ENCODE measurements at regions of chr9 and their contacts with region 1.

Region 1: DNA sequence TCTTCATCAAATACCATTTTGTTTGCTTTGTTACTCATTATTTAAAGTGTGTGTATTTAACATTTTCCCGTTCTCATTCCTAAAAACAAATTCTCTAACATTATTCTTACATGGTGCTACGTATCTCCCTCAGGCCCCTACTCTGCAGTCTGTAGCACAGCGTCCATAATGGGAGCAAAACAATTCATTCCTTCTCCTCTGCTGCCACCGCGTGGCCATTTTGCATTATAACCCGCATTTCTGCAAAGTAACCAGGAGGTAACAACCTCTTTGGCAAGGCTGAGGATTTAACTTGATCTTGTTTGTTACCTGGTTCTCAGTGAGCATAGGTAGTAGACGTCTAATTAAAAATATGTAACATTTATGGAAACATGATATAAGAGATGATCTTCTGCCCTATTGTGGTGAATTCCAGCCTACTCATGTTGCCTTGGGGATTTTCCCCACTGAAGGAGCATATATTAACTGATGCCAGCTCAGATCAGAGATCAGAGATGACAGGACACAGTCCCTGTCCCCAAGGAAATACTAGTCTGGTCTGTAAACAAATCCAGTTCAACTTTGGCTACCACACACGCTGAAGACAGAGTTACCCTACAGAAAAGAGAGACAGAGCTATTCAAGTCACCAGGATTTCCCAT is 10.5 kb downstream of the OR1K1 start:
- DNase-seq: peak; percentile 50 to 86 (median 77)
- ATAC-seq: peak; percentile 97
- H3K4me3 ChIP-seq: no peak overlapping the region
- H3K4me3 Mint-ChIP-seq: no peak overlapping the region
- H3K27ac ChIP-seq: no peak overlapping the region
- H3K27ac Mint-ChIP-seq: no peak overlapping the region
- H3K4me1 ChIP-seq: peaks cover 10% of the 10 kb centered on the region
- H3K4me1 Mint-ChIP-seq: peaks cover 18% of the 10 kb centered on the region
- H3K27me3 ChIP-seq: no peaks in the 10 kb centered on the region
- H3K27me3 Mint-ChIP-seq: no peaks in the 10 kb centered on the region
- CTCF ChIP-seq: peak; percentile 95

Region 2: DNA sequence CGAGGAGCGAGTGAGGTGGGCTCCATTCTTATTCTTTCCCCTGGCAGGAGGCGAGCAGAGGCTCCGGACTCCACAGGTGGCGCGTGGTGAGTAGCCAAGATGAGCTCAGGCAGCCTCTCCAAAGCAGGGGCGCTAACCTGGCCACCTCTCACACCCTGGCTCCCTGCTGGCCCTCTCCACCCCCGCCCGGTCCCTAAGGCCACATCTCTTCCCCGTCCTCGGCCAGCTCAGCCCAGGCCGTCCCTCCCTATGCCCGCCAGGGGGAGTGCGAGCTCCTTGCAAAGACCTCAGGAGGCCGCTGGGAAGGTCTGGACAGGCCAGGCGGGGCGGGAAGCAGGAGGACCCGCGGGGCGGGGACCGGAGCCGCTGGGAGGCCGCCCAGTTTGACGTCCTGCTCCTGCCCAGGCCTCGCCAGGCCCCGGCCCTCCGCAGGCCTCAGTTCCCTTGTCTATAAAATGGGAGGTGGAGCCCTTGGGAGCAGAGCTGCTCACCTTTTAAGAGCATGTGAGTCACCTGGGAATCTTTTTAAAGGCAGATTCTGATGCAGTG is 1264.5 kb before region 1 on chr9:
- CTCF ChIA-PET with region 1: no interaction called
- POLR2A ChIA-PET with region 1: no interaction called
- intact Hi-C with region 1: loop called in 1 of 2 experiments (anchors 5 kb)
- DNase-seq: peak; percentile 28 to 72 (median 62)
- ATAC-seq: peak; percentile 59
- H3K4me3 ChIP-seq: no peak overlapping the region
- H3K4me3 Mint-ChIP-seq: no peak overlapping the region
- H3K27ac ChIP-seq: no peak overlapping the region
- H3K27ac Mint-ChIP-seq: no peak overlapping the region
- H3K4me1 ChIP-seq: peaks cover 14% of the 10 kb centered on the region
- H3K4me1 Mint-ChIP-seq: peaks cover 2% of the 10 kb centered on the region
- H3K27me3 ChIP-seq: peaks cover 4 to 7% of the 10 kb centered on the region in 2 experiments
- H3K27me3 Mint-ChIP-seq: peaks cover 33% of the 10 kb centered on the region
- CTCF ChIP-seq: peak; percentile 57

Region 3: GRCh38 chr9:122350638-122351355 is 459.6 kb before region 1 on chr9:
- CTCF ChIA-PET with region 1: interaction called, 5 read pairs
- POLR2A ChIA-PET with region 1: no interaction called
- intact Hi-C with region 1: loop called (anchors 1 to 2 kb)
- DNase-seq: peak; percentile 58 to 89 (median 76)
- ATAC-seq: peak; percentile 82
- H3K4me3 ChIP-seq: no peak overlapping the region
- H3K4me3 Mint-ChIP-seq: no peak overlapping the region
- H3K27ac ChIP-seq: no peak overlapping the region
- H3K27ac Mint-ChIP-seq: no peak overlapping the region
- H3K4me1 ChIP-seq: peaks cover 21% of the 10 kb centered on the region
- H3K4me1 Mint-ChIP-seq: peaks cover 27% of the 10 kb centered on the region
- H3K27me3 ChIP-seq: peaks cover 0 to 5% of the 10 kb centered on the region in 2 experiments
- H3K27me3 Mint-ChIP-seq: peaks cover 21% of the 10 kb centered on the region
- CTCF ChIP-seq: peak; percentile 97

Region 4: DNA sequence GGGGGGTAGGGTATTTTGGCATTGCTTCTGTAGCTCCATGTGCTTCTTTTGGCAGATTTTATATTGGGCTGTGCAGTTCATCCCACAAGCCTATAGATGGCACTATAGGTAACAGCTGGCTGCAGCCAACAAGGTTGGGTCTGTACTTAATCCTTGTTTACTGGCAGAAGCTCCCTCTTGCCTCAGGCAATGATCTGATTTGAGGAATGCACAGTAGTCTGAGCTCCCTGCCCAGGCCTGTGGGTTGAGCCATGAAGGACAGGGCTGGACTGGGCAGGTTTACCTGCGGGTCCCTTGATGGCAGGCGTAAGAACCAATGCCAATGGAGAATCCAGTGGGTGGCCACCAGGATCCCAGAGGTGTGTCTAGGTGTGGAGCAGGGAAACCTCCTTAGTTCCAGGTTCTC is 311.5 kb before region 1 on chr9:
- CTCF ChIA-PET with region 1: interaction called, 18 read pairs
- POLR2A ChIA-PET with region 1: no interaction called
- intact Hi-C with region 1: no loop called
- DNase-seq: peak in 3 of 9 experiments; percentile 14 to 51 (median 35)
- ATAC-seq: peak; percentile 71
- H3K4me3 ChIP-seq: no peak overlapping the region
- H3K4me3 Mint-ChIP-seq: no peak overlapping the region
- H3K27ac ChIP-seq: no peak overlapping the region
- H3K27ac Mint-ChIP-seq: no peak overlapping the region
- H3K4me1 ChIP-seq: no peaks in the 10 kb centered on the region
- H3K4me1 Mint-ChIP-seq: no peaks in the 10 kb centered on the region
- H3K27me3 ChIP-seq: no peaks in the 10 kb centered on the region
- H3K27me3 Mint-ChIP-seq: peaks cover 29% of the 10 kb centered on the region
- CTCF ChIP-seq: peak; percentile 72

Region 5: GRCh38 chr9:122695696-122696095 is 114.7 kb before region 1 on chr9:
- CTCF ChIA-PET with region 1: no interaction called
- POLR2A ChIA-PET with region 1: no interaction called
- intact Hi-C with region 1: no loop called
- DNase-seq: no peak
- ATAC-seq: no peak
- H3K4me3 ChIP-seq: no peak overlapping the region
- H3K4me3 Mint-ChIP-seq: no peak overlapping the region
- H3K27ac ChIP-seq: no peak overlapping the region
- H3K27ac Mint-ChIP-seq: no peak overlapping the region
- H3K4me1 ChIP-seq: no peaks in the 10 kb centered on the region
- H3K4me1 Mint-ChIP-seq: no peaks in the 10 kb centered on the region
- H3K27me3 ChIP-seq: no peaks in the 10 kb centered on the region
- H3K27me3 Mint-ChIP-seq: peaks cover 3% of the 10 kb centered on the region
- CTCF ChIP-seq: no peak

Region 6: DNA sequence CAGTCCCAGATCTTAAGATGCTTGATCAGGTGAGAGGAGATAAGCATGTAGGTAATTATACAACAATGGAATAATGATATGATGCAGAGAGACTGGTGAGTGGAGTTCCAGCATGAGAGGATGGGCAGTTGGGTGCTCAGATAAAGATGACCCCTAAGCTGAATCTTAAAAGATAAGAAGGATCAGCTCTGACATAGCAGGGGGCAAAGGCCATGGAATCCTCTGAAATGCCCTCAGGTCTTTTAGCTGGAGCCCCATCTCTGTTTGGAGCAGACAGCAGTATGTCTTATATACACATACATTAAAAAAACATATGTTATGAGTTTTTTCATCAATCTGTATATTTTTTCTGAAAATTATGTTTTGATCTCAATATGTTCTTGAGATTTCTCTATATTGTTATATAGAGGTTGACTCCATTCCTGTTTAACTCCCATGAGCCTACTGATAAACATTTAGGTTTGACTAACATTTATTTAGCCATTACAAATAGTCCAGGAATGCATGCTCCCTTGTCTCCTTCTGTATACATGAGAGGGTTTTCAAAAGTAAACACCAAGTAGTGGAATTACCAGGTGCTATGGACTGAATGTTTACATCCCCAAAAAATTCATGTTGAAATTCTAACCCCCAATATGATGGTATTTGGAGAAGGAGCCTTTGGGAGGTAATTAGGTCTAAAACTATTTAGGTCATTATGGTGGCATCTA is 25.3 kb before region 1 on chr9:
- CTCF ChIA-PET with region 1: no interaction called
- POLR2A ChIA-PET with region 1: no interaction called
- intact Hi-C with region 1: no loop called
- DNase-seq: no peak
- ATAC-seq: no peak
- H3K4me3 ChIP-seq: no peak overlapping the region
- H3K4me3 Mint-ChIP-seq: no peak overlapping the region
- H3K27ac ChIP-seq: no peak overlapping the region
- H3K27ac Mint-ChIP-seq: no peak overlapping the region
- H3K4me1 ChIP-seq: no peaks in the 10 kb centered on the region
- H3K4me1 Mint-ChIP-seq: no peaks in the 10 kb centered on the region
- H3K27me3 ChIP-seq: no peaks in the 10 kb centered on the region
- H3K27me3 Mint-ChIP-seq: no peaks in the 10 kb centered on the region
- CTCF ChIP-seq: no peak

Region 7: DNA sequence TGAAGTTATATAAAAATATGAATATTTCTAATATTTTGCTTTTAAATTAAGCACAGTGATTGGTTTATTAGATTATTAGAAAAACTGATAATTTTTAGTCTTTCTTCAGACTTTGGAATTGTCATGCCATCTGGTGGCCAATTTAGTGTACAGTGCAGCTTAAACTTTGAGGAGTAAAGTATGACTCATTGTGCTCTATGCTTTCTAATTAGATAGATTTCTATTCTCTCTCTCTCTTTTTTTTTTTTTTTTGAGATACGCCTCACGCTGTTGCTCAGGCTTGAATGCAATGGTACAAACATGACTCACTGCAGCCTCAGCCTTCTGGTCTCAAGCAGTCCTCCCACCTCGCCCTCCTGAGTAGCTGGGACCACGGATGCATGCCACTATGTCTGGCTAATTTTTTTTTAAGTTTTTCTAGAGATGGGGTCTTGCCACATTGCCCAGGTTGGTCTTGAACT is 181.0 kb after region 1 on chr9:
- CTCF ChIA-PET with region 1: no interaction called
- POLR2A ChIA-PET with region 1: no interaction called
- intact Hi-C with region 1: loop called in 1 of 2 experiments (anchors 10 kb)
- DNase-seq: peak in 5 of 9 experiments; percentile 12 to 65 (median 50)
- ATAC-seq: peak; percentile 86
- H3K4me3 ChIP-seq: no peak overlapping the region
- H3K4me3 Mint-ChIP-seq: no peak overlapping the region
- H3K27ac ChIP-seq: no peak overlapping the region
- H3K27ac Mint-ChIP-seq: no peak overlapping the region
- H3K4me1 ChIP-seq: no peaks in the 10 kb centered on the region
- H3K4me1 Mint-ChIP-seq: peaks cover 2% of the 10 kb centered on the region
- H3K27me3 ChIP-seq: no peaks in the 10 kb centered on the region
- H3K27me3 Mint-ChIP-seq: no peaks in the 10 kb centered on the region
- CTCF ChIP-seq: peak; percentile 71